Panc1 (cell line): ENCODE measurements at regions of chr1 and their contacts with region 1.

Region 1: GRCh38 chr1:31663622-31664452 is 19.2 kb upstream of the PEF1 start:
- DNase-seq: peak; percentile 45
- ATAC-seq: peak; percentile 67
- H3K4me3 ChIP-seq: no peak overlapping the region
- H3K27ac ChIP-seq: peak overlapping the region; percentile 48; the same call in 1 of the 2 replicates
- H3K4me1 ChIP-seq: peaks cover 29% of the 10 kb centered on the region
- H3K27me3 ChIP-seq: no peaks in the 10 kb centered on the region
- CTCF ChIP-seq: peak; percentile 94

Region 2: GRCh38 chr1:31679676-31680230 is 15.9 kb after region 1 on chr1:
- CTCF ChIA-PET with region 1: interaction called, 11 read pairs
- POLR2A ChIA-PET with region 1: no interaction called
- in situ Hi-C with region 1: no loop called
- intact Hi-C with region 1: no loop called
- DNase-seq: no peak
- ATAC-seq: no peak
- H3K4me3 ChIP-seq: no peak overlapping the region
- H3K27ac ChIP-seq: no peak overlapping the region
- H3K4me1 ChIP-seq: no peaks in the 10 kb centered on the region; the same call in 1 of the 2 replicates
- H3K27me3 ChIP-seq: no peaks in the 10 kb centered on the region
- CTCF ChIP-seq: no peak; the same call in 1 of the 2 replicates

Region 3: GRCh38 chr1:31705080-31705866 is 41.4 kb after region 1 on chr1:
- CTCF ChIA-PET with region 1: interaction called, 6 read pairs
- POLR2A ChIA-PET with region 1: no interaction called
- in situ Hi-C with region 1: no loop called
- intact Hi-C with region 1: loop called (anchors 5 kb)
- DNase-seq: no peak
- ATAC-seq: peak; percentile 50
- H3K4me3 ChIP-seq: 0 out of 4 replicates have a peak overlapping the region, but pooled peaks of 1 of the 2 experiments have one; percentile 2
- H3K27ac ChIP-seq: peak overlapping the region; percentile 74
- H3K4me1 ChIP-seq: peaks cover 43% of the 10 kb centered on the region
- H3K27me3 ChIP-seq: no peaks in the 10 kb centered on the region
- CTCF ChIP-seq: no peak

Region 4: GRCh38 chr1:31745096-31745945 is 81.5 kb after region 1 on chr1:
- CTCF ChIA-PET with region 1: interaction called, 8 read pairs
- POLR2A ChIA-PET with region 1: no interaction called
- in situ Hi-C with region 1: no loop called
- intact Hi-C with region 1: loop called (anchors 10 kb)
- DNase-seq: no peak
- ATAC-seq: peak; percentile 78
- H3K4me3 ChIP-seq: no peak overlapping the region
- H3K27ac ChIP-seq: no peak overlapping the region
- H3K4me1 ChIP-seq: peaks cover 30% of the 10 kb centered on the region
- H3K27me3 ChIP-seq: no peaks in the 10 kb centered on the region
- CTCF ChIP-seq: peak; percentile 86; the same call in 1 of the 2 replicates